Gastrocnemius medialis (tissue), 4 donors: ENCODE measurements at regions of chr6 and their contacts with region 1.

Region 1: DNA sequence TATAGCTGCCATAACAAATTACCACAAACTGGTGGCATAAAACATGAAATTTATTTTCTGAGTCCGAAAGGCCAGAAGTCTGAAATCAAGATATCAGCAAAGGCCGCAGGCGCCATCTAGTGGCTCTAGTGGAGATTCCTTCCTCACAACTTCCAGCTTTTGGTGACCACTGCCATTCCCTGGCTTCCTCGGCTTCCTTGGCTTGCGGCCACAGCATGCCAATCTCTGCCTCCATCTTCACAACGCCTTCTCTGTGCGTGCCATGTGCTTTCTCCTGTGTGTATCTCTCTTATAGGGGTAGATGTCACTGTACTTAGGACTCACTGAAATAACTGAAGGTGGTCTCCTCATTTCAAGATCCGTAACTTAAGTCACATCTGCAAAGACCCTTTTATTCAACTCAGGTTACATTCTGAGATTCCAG is 5.4 kb upstream of the PLAGL1 start:
- DNase-seq: peak; percentile 20 to 44
- ATAC-seq: peak in 1 of 2 donors; percentile 36
- H3K4me3 ChIP-seq: no peak overlapping the region
- H3K27ac ChIP-seq: no peak overlapping the region
- H3K4me1 ChIP-seq: no peaks in the 10 kb centered on the region
- H3K27me3 ChIP-seq: no peaks in the 10 kb centered on the region
- CTCF ChIP-seq: peak; percentile 73 to 93 (median 80)
- POLR2A ChIP-seq: no peak

Region 2: DNA sequence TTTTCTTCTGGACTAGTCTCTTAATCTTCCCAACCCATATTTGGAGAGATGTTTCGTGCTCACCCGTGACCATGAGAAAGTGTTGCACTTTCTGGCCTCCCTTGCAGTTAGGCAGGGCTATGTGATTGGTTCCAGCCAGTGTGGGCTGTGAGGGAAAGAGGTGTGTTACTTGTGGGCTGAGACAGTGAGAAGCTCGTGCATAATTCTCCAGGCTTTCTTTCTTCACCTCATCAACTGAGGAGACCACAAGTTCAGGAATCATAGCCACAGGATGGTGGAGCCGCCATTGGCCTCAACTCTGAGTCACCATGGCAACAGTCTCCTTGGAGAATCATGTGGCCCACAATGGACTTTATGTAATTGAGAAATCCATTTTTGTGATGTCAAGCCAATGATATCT is 444.5 kb before region 1 on chr6:
- in situ Hi-C with region 1: loop called in 1 of 4 experiments (anchors 5 kb)
- intact Hi-C with region 1: no loop called
- DNase-seq: no peak
- ATAC-seq: peak in 1 of 2 donors; percentile 47
- H3K4me3 ChIP-seq: no peak overlapping the region
- H3K27ac ChIP-seq: no peak overlapping the region
- H3K4me1 ChIP-seq: no peaks in the 10 kb centered on the region
- H3K27me3 ChIP-seq: no peaks in the 10 kb centered on the region
- CTCF ChIP-seq: no peak
- POLR2A ChIP-seq: no peak

Region 3: GRCh38 chr6:143575440-143575839 is 438.1 kb before region 1 on chr6:
- in situ Hi-C with region 1: loop called (anchors 5 kb)
- intact Hi-C with region 1: loop called (anchors 1 kb)
- DNase-seq: peak; percentile 18 to 33
- ATAC-seq: peak; percentile 86
- H3K4me3 ChIP-seq: no peak overlapping the region
- H3K27ac ChIP-seq: no peak overlapping the region
- H3K4me1 ChIP-seq: peaks cover 0 to 4% of the 10 kb centered on the region in 2 donors
- H3K27me3 ChIP-seq: no peaks in the 10 kb centered on the region
- CTCF ChIP-seq: peak; percentile 63 to 87 (median 84)
- POLR2A ChIP-seq: no peak

Region 4: DNA sequence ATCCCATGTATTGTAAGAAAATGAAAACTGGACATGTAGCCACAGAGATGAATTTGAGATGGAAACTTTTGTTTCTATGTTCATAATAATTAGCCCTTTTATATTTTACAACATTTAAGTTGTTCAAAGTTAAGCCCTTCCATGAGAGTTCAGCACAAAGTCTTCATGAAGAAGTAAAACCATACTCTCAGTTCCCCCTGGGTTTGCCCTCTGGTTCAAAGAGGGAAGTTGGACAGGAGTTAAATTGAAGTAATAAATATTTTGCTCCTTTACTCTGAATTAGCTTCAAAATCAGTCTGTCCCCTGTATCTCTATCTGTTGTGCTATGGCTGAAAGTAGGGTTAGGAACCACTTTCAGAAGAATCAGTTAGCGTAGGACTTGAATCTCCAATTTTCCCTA is 304.6 kb before region 1 on chr6:
- in situ Hi-C with region 1: no loop called
- intact Hi-C with region 1: no loop called
- DNase-seq: no peak
- ATAC-seq: no peak
- H3K4me3 ChIP-seq: no peak overlapping the region
- H3K27ac ChIP-seq: no peak overlapping the region
- H3K4me1 ChIP-seq: peaks cover 0 to 3% of the 10 kb centered on the region in 2 donors
- H3K27me3 ChIP-seq: no peaks in the 10 kb centered on the region
- CTCF ChIP-seq: no peak
- POLR2A ChIP-seq: no peak

Region 5: GRCh38 chr6:143940011-143940597 is 73.4 kb before region 1 on chr6:
- in situ Hi-C with region 1: loop called in 2 of 4 experiments (anchors 10 kb)
- intact Hi-C with region 1: loop called (anchors 5 kb)
- DNase-seq: no peak
- ATAC-seq: no peak
- H3K4me3 ChIP-seq: no peak overlapping the region
- H3K27ac ChIP-seq: no peak overlapping the region
- H3K4me1 ChIP-seq: no peaks in the 10 kb centered on the region
- H3K27me3 ChIP-seq: no peaks in the 10 kb centered on the region
- CTCF ChIP-seq: peak in 4 of 5 experiments; percentile 2 to 48 (median 28)
- POLR2A ChIP-seq: no peak